Activated CD4-positive, alpha-beta T cell treated with anti-CD3 and anti-CD28 coated beads, Interleukin-2, amount 10 ng/mL, durations not matched to agents 24 days and 14 days (primary cell): ENCODE measurements at regions of chr16 and their contacts with region 1.

Region 1: DNA sequence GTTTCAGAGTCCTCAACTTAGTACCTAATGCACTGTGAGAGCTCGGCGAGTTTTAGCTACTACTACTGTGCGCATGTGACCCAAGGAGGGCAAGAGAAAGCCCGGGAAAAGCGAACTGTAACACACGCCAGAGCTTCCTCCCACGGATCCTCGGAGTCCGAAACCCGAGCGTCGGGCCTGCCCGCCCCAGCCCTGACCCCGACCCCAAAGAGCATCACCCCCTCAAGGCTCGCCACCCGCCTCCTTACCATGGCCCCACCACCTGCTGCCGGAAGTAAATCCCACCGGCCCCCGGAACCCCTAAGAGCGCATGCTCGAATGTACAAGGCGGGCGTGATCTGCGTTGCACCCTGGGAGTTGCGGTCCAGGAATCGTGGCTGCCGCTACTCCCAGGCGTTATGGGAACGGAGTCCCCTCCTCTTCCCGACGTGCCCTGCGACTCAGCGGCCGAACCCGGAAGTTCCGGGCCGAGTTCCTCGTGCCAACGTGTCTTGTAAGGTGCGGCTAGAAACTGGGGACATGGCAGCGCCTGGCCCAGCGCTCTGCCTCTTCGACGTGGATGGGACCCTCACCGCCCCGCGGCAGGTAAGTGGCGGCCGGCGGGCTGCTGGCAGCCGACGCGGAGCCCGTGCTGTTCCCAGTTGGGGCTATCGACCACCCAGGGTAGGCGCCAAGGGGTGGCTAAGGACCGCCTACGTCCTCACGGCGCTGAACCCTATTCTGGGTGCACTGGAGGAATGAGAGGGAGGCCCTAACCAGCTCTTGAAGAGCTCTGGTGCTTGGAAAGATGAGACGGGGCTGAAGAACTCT is at the starts of genes PMM2 and TMEM186:
- DNase-seq: peak; percentile 99
- H3K4me3 Mint-ChIP-seq: peak within 1 kb of the TSS; percentile 98
- H3K27ac Mint-ChIP-seq: peak within 1 kb of the TSS; percentile 95
- H3K4me1 Mint-ChIP-seq: peaks cover 23% of the 10 kb centered on the region
- H3K27me3 Mint-ChIP-seq: no peaks in the 10 kb centered on the region
- total RNA-seq, gene PMM2: 74.1 and 74.9 TPM in 2 replicates
- total RNA-seq, gene TMEM186: 19.3 and 20.4 TPM in 2 replicates

Region 2: GRCh38 chr16:8370374-8371270 is 426.9 kb before region 1 on chr16:
- intact Hi-C with region 1: no loop called
- DNase-seq: no peak
- H3K4me3 Mint-ChIP-seq: no peak overlapping the region
- H3K27ac Mint-ChIP-seq: no peak overlapping the region
- H3K4me1 Mint-ChIP-seq: no peaks in the 10 kb centered on the region
- H3K27me3 Mint-ChIP-seq: no peaks in the 10 kb centered on the region

Region 3: GRCh38 chr16:8621572-8622314 is 175.8 kb before region 1 on chr16 and contains the start of gene METTL22:
- intact Hi-C with region 1: loop called (anchors 1 kb)
- DNase-seq: peak; percentile 98
- H3K4me3 Mint-ChIP-seq: peak within 1 kb of the TSS; percentile 96
- H3K27ac Mint-ChIP-seq: peak within 1 kb of the TSS; percentile 92
- H3K4me1 Mint-ChIP-seq: peaks cover 12% of the 10 kb centered on the region
- H3K27me3 Mint-ChIP-seq: peaks cover 20% of the 10 kb centered on the region
- total RNA-seq, gene METTL22: 36.2 and 38.4 TPM in 2 replicates

Region 4: DNA sequence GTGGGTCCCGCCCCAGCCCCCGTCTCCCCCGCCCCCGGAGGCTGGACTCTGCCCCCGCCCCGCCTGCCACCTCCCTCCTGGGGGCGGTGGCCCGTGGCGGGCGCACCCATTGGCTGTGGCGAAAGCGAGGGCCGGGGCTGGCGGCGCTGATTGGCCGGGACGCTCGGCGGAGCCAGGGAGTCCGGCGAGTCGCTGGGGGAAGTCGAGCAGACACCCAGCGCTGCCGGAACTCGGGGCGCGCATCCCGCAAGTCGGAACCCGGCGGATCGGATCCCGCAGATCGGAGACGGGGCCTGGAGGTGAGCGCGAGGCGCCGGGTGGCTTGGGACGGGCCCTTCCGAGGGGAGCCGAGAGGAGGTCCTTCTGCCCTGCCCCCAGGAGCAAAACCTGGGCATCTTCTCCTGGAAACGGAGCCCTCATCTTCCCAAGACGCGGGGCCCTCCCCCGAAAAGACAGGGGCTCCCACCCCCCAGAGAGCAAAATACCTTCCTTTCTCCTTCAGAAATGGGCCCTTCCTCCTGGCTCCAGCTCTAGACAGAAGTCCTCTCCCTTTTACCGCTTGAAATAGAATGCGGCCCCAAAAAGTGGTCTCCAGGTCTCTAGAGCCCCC is 123.1 kb before region 1 on chr16 and contains the start of gene ABAT:
- intact Hi-C with region 1: loop called (anchors 1 kb)
- DNase-seq: peak; percentile 97
- H3K4me3 Mint-ChIP-seq: peak within 1 kb of the TSS; percentile 88
- H3K27ac Mint-ChIP-seq: peak within 1 kb of the TSS; percentile 91
- H3K4me1 Mint-ChIP-seq: peaks cover 15% of the 10 kb centered on the region
- H3K27me3 Mint-ChIP-seq: no peaks in the 10 kb centered on the region
- total RNA-seq, gene ABAT: 5.0 and 5.9 TPM in 2 replicates

Region 5: DNA sequence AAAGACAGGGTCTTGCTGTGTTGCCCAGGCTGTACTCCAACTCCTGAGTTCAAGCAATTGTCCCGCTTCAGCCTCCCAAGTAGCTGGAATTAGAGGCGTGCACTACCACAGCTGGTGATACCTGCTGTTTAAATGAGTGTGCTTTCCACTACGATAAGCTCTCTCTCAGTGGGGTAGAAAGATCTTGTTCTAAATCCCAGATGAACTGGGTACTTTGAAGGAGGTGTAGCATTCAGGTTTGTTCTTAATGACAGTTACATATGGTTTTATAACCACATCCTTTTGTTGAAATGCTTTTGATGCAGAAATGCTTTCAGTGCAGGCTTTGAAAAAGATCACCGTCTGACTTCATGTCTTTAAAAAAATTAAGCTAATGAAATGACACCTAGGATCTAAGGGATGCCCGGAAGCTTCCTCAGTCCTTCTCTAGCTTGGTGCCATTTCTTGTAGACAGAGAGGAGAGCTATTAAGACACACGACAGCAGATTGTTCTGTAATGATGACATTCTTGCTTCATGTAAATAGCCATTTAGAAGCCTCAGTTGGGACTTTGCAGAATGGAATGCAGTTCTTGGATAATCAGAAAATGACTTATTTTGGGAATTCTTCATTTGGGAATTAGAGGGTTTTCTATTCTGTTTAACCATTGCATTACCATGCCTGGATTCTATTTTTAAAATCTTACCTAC is 19.5 kb after region 1 on chr16:
- intact Hi-C with region 1: no loop called
- DNase-seq: peak; percentile 67
- H3K4me3 Mint-ChIP-seq: peak overlapping the region; percentile 38
- H3K27ac Mint-ChIP-seq: peak overlapping the region; percentile 71
- H3K4me1 Mint-ChIP-seq: peaks cover 26% of the 10 kb centered on the region
- H3K27me3 Mint-ChIP-seq: no peaks in the 10 kb centered on the region

Region 6: DNA sequence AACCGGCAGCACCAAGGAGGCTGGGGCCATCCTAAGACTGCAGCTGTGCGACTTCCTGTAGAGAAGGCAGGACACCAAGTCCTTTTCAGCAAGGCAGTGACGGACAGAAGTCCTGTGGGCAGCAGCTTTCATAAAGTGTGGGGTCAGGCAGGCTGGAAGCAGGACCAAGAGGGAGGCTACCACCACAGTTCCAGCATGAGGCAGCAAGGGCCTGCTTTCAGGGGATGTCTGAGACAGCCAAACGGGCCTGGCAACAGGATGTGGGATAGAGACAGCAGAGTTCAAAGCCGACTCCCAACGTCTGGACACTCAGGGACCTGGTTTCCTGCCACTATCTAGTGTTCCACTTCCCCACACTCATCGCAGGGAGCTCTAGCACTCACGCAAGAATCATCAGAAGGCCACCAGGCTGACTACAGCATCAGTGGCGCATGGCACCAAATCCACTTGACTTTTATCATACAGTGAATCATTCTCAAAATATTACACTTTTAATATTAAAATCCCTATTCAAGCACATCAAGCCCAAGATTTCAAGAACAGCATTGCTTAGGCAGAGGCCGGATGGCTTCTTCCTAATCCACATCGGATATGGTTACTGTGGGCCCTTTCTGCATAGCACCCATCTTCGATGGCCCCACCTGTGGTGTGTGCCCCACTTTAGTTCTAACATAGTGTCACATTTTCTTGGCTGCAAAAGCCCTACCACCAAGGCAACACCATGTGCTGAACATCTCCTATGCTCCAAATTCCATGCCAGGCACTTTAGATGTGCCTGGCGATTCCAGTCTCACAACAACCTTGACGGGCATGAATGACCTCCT is 161.0 kb after region 1 on chr16:
- intact Hi-C with region 1: loop called (anchors 2 kb)
- DNase-seq: peak; percentile 77
- H3K4me3 Mint-ChIP-seq: peak overlapping the region; percentile 94
- H3K27ac Mint-ChIP-seq: peak overlapping the region; percentile 88
- H3K4me1 Mint-ChIP-seq: peaks cover 70% of the 10 kb centered on the region
- H3K27me3 Mint-ChIP-seq: no peaks in the 10 kb centered on the region

Region 7: DNA sequence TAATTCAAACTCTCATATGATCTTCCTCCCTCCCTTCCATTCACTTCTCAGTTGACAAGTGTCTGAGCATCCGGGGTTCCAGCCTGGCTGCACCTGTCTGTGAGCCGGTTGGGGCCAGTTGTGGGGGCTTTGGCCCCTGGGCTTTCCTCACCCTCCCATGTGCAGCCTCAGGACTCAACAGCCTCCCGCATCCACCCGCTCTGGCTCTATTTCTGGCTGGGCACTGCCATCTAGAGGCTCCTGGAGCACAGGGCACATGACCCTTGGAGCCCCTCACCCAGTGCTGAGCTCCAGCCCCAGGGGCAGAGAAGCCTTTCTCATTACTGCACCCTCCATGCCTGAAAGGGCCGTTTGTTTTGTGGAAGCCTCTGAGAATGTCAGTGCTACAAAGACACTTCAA is 337.2 kb after region 1 on chr16:
- intact Hi-C with region 1: loop called (anchors 10 kb)
- DNase-seq: peak; percentile 89
- H3K4me3 Mint-ChIP-seq: no peak overlapping the region
- H3K27ac Mint-ChIP-seq: no peak overlapping the region
- H3K4me1 Mint-ChIP-seq: peaks cover 14% of the 10 kb centered on the region
- H3K27me3 Mint-ChIP-seq: peaks cover 6% of the 10 kb centered on the region